ENCODE measurements at regions of chr3 and their contacts with region 1.

Region 1: GRCh38 chr3:146577662-146578061 is 27.5 kb downstream of the PLSCR5 start:
- DNase-seq: peak in 7 of 14 experiments; percentile 4 to 68 (median 44)
- ATAC-seq: peak; percentile 39
- H3K4me3 ChIP-seq: no peak overlapping the region
- H3K4me3 Mint-ChIP-seq: no peak overlapping the region
- H3K27ac ChIP-seq: no peak overlapping the region
- H3K27ac Mint-ChIP-seq: no peak overlapping the region
- H3K4me1 ChIP-seq: no peaks in the 10 kb centered on the region
- H3K4me1 Mint-ChIP-seq: no peaks in the 10 kb centered on the region
- H3K27me3 ChIP-seq: no peaks in the 10 kb centered on the region
- H3K27me3 Mint-ChIP-seq: peaks cover 7% of the 10 kb centered on the region
- CTCF ChIP-seq: peak; percentile 73

Region 2: GRCh38 chr3:146065573-146066006 is 512.1 kb before region 1 on chr3:
- CTCF ChIA-PET with region 1: no interaction called
- POLR2A ChIA-PET with region 1: no interaction called
- intact Hi-C with region 1: loop called in 1 of 2 experiments (anchors 5 kb)
- DNase-seq: peak in 3 of 14 experiments; percentile 20 to 25 (median 22)
- ATAC-seq: no peak
- H3K4me3 ChIP-seq: no peak overlapping the region
- H3K4me3 Mint-ChIP-seq: no peak overlapping the region
- H3K27ac ChIP-seq: no peak overlapping the region
- H3K27ac Mint-ChIP-seq: no peak overlapping the region
- H3K4me1 ChIP-seq: no peaks in the 10 kb centered on the region
- H3K4me1 Mint-ChIP-seq: no peaks in the 10 kb centered on the region
- H3K27me3 ChIP-seq: no peaks in the 10 kb centered on the region
- H3K27me3 Mint-ChIP-seq: no peaks in the 10 kb centered on the region
- CTCF ChIP-seq: peak; percentile 61

Region 3: DNA sequence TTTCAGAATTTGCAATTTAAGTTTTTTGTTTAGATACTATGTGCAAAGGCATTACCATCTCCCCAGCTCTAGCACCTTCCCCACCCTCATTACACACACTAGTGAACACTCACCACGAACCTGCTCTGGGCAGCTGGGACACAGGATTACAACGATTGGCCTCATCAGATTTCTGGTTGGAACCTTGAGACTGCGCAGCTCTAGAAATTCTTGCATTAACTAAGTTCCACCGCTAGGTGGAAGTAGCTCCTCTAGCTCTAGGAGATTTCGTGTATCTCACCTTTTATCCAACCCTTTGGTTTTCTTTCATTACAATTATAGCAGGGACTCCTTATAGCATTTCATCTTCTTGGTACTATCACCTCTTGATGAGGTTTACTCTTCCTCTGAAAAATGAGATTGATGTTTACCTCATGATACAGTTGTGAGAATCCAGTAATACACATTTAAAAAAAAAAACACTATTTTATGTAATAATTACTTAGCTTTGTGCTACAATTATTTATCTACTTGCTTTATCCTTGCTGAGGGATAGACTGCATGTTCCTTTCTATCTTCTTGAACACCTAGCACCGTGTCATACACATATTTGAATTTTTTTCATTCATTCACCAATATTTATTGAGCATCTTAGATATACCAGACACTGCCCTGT is 388.0 kb before region 1 on chr3:
- CTCF ChIA-PET with region 1: interaction called, 6 read pairs
- POLR2A ChIA-PET with region 1: no interaction called
- intact Hi-C with region 1: loop called in 1 of 2 experiments (anchors 1 kb)
- DNase-seq: peak in 4 of 14 experiments; percentile 7 to 46 (median 34)
- ATAC-seq: peak; percentile 43
- H3K4me3 ChIP-seq: no peak overlapping the region
- H3K4me3 Mint-ChIP-seq: no peak overlapping the region
- H3K27ac ChIP-seq: no peak overlapping the region
- H3K27ac Mint-ChIP-seq: no peak overlapping the region
- H3K4me1 ChIP-seq: no peaks in the 10 kb centered on the region
- H3K4me1 Mint-ChIP-seq: no peaks in the 10 kb centered on the region
- H3K27me3 ChIP-seq: no peaks in the 10 kb centered on the region
- H3K27me3 Mint-ChIP-seq: peaks cover 24% of the 10 kb centered on the region
- CTCF ChIP-seq: peak; percentile 64

Region 4: DNA sequence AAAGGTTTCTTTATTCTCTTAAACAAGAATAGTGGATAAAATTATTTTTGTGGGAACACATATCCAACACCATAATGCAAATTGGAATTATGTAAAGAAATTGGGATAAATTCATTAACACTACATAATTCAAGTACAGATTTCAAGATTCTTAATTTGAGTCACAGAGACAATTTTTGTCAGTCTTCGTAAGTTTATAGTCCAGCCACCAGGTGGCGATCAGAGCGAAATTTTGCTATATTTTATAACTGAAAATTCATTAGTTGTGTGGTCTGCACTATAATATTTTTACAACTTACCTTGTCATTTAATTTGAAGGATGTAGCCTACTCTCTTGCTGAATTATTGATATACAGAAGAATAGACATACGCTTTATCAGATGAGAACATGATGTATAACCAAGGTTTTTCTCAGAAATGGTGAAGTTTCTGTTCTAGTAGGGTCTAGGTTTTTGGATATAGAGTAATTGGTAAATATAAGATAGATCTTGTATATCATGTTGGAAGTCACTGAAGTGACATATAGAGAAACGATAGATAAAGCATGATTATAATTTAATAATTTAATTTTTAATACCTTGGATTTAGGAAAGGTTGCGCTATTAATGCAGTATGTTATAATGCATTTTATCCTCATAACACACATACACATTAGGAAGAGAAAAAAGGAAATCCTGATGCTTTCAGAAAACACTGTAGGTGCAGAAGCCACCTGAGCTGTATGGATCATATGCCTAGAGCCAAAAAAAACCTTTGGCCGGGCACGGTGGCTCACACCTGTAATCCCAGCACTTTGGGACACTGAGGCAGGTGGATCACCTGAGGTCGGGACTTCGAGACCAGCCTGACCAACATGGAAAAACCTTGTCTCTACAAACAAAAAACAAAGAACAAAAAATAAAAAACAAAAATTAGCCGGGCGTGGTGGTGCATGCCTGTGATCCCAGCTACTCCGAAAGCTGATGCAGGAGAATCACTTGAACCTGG is 358.5 kb before region 1 on chr3:
- CTCF ChIA-PET with region 1: interaction called, 4 read pairs
- POLR2A ChIA-PET with region 1: no interaction called
- intact Hi-C with region 1: loop called (anchors 1 kb)
- DNase-seq: peak; percentile 6 to 57 (median 16)
- ATAC-seq: no peak
- H3K4me3 ChIP-seq: no peak overlapping the region
- H3K4me3 Mint-ChIP-seq: no peak overlapping the region
- H3K27ac ChIP-seq: no peak overlapping the region
- H3K27ac Mint-ChIP-seq: no peak overlapping the region
- H3K4me1 ChIP-seq: no peaks in the 10 kb centered on the region
- H3K4me1 Mint-ChIP-seq: no peaks in the 10 kb centered on the region
- H3K27me3 ChIP-seq: no peaks in the 10 kb centered on the region
- H3K27me3 Mint-ChIP-seq: no peaks in the 10 kb centered on the region
- CTCF ChIP-seq: peak; percentile 78

Region 5: GRCh38 chr3:146625117-146625775 is 47.6 kb after region 1 on chr3:
- CTCF ChIA-PET with region 1: no interaction called
- POLR2A ChIA-PET with region 1: no interaction called
- intact Hi-C with region 1: no loop called
- DNase-seq: peak in 1 of 14 experiments; percentile 8
- ATAC-seq: no peak
- H3K4me3 ChIP-seq: no peak overlapping the region
- H3K4me3 Mint-ChIP-seq: peak overlapping the region; percentile 35
- H3K27ac ChIP-seq: no peak overlapping the region
- H3K27ac Mint-ChIP-seq: no peak overlapping the region
- H3K4me1 ChIP-seq: no peaks in the 10 kb centered on the region
- H3K4me1 Mint-ChIP-seq: peaks cover 10% of the 10 kb centered on the region
- H3K27me3 ChIP-seq: no peaks in the 10 kb centered on the region
- H3K27me3 Mint-ChIP-seq: peaks cover 6% of the 10 kb centered on the region
- CTCF ChIP-seq: no peak

Region 6: GRCh38 chr3:147231111-147231510 is 653.4 kb after region 1 on chr3:
- CTCF ChIA-PET with region 1: no interaction called
- POLR2A ChIA-PET with region 1: no interaction called
- intact Hi-C with region 1: no loop called
- DNase-seq: no peak
- ATAC-seq: no peak
- H3K4me3 ChIP-seq: no peak overlapping the region
- H3K4me3 Mint-ChIP-seq: no peak overlapping the region
- H3K27ac ChIP-seq: no peak overlapping the region
- H3K27ac Mint-ChIP-seq: no peak overlapping the region
- H3K4me1 ChIP-seq: no peaks in the 10 kb centered on the region
- H3K4me1 Mint-ChIP-seq: no peaks in the 10 kb centered on the region
- H3K27me3 ChIP-seq: no peaks in the 10 kb centered on the region
- H3K27me3 Mint-ChIP-seq: no peaks in the 10 kb centered on the region
- CTCF ChIP-seq: no peak

Measured in CD4-positive, alpha-beta T cell (primary cell).